PC-9 (cell line): ENCODE measurements at regions of chr9 and their contacts with region 1.

Region 1: GRCh38 chr9:92954049-92954861 is 6.9 kb downstream of the FGD3 start:
- DNase-seq: peak; percentile 90
- H3K4me3 ChIP-seq: peak overlapping the region; percentile 35; the same call in 1 of the 2 replicates
- H3K27ac ChIP-seq: peak overlapping the region; percentile 96
- H3K4me1 ChIP-seq: peaks cover 52% of the 10 kb centered on the region
- H3K27me3 ChIP-seq: no peaks in the 10 kb centered on the region
- CTCF ChIP-seq: no peak

Region 2: GRCh38 chr9:91949946-91950664 is 1004.1 kb before region 1 on chr9 and contains the start of gene ROR2:
- CTCF ChIA-PET with region 1: no interaction called
- POLR2A ChIA-PET with region 1: no interaction called
- intact Hi-C with region 1: no loop called
- DNase-seq: no peak
- H3K4me3 ChIP-seq: no peak within 1 kb of the TSS
- H3K27ac ChIP-seq: no peak within 1 kb of the TSS
- H3K4me1 ChIP-seq: no peaks in the 10 kb centered on the region
- H3K27me3 ChIP-seq: peaks cover 33% of the 10 kb centered on the region
- CTCF ChIP-seq: no peak
- total RNA-seq, gene ROR2: not detected in 2 replicates

Region 3: GRCh38 chr9:92781923-92782322 is 172.3 kb before region 1 on chr9:
- CTCF ChIA-PET with region 1: interaction called, 12 read pairs
- POLR2A ChIA-PET with region 1: no interaction called
- intact Hi-C with region 1: no loop called
- DNase-seq: peak; percentile 76 to 97
- H3K4me3 ChIP-seq: no peak overlapping the region
- H3K27ac ChIP-seq: peak overlapping the region; percentile 66
- H3K4me1 ChIP-seq: peaks cover 31% of the 10 kb centered on the region
- H3K27me3 ChIP-seq: no peaks in the 10 kb centered on the region
- CTCF ChIP-seq: no peak

Region 4: DNA sequence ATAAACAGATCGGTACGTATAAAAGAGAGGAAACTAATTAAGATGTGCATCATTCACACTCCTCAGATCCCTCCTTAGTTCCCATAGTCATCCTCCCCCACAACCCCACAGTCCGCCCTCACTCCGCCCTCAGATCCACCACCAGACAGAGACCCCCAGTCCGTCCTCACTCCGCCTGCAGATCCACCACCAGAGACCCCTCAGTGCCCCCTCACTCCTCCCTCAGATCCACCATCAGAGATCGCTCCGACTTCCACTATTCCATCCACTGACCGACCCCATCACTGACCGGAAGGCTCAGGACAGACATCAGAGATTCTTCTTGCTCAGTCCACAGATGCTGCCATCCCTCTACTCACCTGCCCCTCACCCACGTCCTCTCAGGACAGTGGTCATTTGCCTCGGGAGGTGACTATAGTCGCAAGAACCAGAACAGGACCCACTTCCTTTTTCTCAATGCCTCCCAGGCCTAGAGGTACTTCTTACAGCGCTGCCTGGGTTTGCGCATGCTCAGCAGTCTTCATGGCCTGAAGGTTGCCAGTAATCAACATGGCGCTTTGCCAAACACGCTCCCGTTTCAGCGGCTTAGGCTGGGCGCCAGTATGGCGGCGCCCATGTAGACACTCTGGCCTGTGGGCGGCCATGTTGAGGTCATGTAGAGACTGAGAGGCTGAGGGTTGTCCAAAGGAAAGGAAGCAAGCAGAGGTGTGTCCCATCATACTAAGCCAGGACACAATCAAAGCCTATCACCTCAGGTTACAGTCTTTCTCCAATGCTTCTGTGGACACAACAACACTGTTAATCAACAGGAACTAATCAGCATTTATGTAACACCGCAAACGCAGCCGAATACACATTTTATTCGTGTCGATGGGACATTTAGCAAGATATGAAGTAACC is 76.5 kb before region 1 on chr9 and contains the start of gene ZNF484:
- CTCF ChIA-PET with region 1: interaction called, 6 read pairs
- POLR2A ChIA-PET with region 1: interaction called, 10 read pairs
- intact Hi-C with region 1: loop called (anchors 1 kb)
- DNase-seq: peak; percentile 94 to 99
- H3K4me3 ChIP-seq: peak within 1 kb of the TSS; percentile 68
- H3K27ac ChIP-seq: peak within 1 kb of the TSS; percentile 72
- H3K4me1 ChIP-seq: peaks cover 28% of the 10 kb centered on the region
- H3K27me3 ChIP-seq: no peaks in the 10 kb centered on the region
- CTCF ChIP-seq: no peak
- total RNA-seq, gene ZNF484: 8.4 and 10.8 TPM in 2 replicates

Region 5: DNA sequence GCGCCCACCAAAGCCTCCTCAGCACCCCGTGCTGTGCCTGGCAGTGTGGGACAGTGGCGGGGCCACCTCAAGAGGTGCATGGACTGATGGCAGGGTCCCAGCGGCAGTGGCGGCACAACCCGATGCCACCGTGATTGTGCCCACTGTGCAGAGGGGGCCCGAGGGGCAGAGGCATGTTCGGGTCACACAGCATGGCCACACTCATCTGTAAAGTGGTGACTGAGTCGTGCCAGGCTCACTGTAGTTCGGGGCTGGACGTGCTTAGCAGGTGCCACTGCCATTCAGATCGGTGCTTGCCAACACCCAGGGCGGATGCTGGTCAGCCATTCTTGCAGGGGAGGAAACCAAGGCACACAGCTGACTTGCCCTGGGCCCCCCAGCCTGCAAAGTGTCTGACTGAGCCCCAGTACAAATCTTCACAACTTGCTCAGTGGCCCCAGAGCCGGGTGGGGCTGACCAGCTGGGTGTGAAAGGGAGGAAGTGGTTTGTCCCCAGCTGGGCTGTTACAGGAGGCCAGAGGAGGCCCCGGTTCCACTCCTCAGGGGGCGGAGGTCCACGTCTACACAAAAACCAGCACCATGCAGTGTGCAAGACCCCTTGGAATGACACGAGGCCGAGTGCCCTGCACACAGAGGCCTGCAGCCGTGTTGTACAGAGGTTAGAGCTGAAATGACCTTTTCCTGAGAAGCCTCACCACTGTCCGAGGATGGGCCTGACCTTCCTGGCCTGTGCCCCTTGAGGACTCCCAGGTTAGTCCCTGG is 10.9 kb after region 1 on chr9:
- CTCF ChIA-PET with region 1: no interaction called
- POLR2A ChIA-PET with region 1: no interaction called
- intact Hi-C with region 1: no loop called
- DNase-seq: no peak
- H3K4me3 ChIP-seq: no peak overlapping the region
- H3K27ac ChIP-seq: no peak overlapping the region
- H3K4me1 ChIP-seq: peaks cover 14% of the 10 kb centered on the region
- H3K27me3 ChIP-seq: no peaks in the 10 kb centered on the region
- CTCF ChIP-seq: no peak

Region 6: GRCh38 chr9:92986176-92987085 is 32.2 kb after region 1 on chr9:
- CTCF ChIA-PET with region 1: interaction called, 6 read pairs
- POLR2A ChIA-PET with region 1: no interaction called
- intact Hi-C with region 1: loop called (anchors 1 kb)
- DNase-seq: no peak
- H3K4me3 ChIP-seq: no peak overlapping the region
- H3K27ac ChIP-seq: no peak overlapping the region
- H3K4me1 ChIP-seq: peaks cover 41% of the 10 kb centered on the region
- H3K27me3 ChIP-seq: no peaks in the 10 kb centered on the region
- CTCF ChIP-seq: peak; percentile 68

Region 7: GRCh38 chr9:93038918-93039317 is 84.7 kb after region 1 on chr9:
- CTCF ChIA-PET with region 1: no interaction called
- POLR2A ChIA-PET with region 1: interaction called, 4 read pairs
- intact Hi-C with region 1: loop called (anchors 1 kb)
- DNase-seq: no peak
- H3K4me3 ChIP-seq: no peak overlapping the region
- H3K27ac ChIP-seq: no peak overlapping the region
- H3K4me1 ChIP-seq: no peaks in the 10 kb centered on the region
- H3K27me3 ChIP-seq: no peaks in the 10 kb centered on the region
- CTCF ChIP-seq: no peak

Region 8: DNA sequence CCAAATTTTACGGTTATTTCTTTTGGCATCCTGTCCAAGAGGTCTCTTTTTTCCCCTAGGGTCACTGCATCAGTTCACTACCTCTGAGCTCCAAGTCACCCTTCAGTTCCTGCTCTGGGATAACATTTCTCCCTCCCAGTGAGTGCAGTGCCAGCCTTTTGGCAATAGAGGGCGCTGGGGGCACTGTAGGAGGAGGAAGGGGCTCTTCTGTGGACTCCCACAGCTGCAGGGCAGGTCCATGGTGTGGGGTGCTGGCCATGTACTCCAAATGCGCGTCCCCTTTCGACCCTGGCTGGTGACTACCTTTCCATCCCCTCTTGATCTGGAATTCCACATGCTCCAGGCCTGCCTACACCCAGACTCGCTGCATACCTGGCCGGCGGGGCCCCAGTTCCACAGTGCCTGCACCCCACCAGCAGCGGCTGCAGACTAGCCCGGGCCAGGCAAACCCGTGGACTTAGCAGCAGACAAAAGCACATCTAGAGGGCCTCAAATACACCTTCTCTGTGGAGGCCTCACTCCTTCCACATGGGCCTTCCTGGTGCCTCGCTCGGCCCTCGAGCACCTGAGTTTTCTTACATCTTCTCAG is 200.2 kb after region 1 on chr9:
- CTCF ChIA-PET with region 1: interaction called, 10 read pairs
- POLR2A ChIA-PET with region 1: no interaction called
- intact Hi-C with region 1: loop called (anchors 2 kb)
- DNase-seq: peak in 1 of 2 experiments; percentile 60
- H3K4me3 ChIP-seq: no peak overlapping the region
- H3K27ac ChIP-seq: no peak overlapping the region
- H3K4me1 ChIP-seq: no peaks in the 10 kb centered on the region; the same call in 1 of the 2 replicates
- H3K27me3 ChIP-seq: no peaks in the 10 kb centered on the region
- CTCF ChIP-seq: peak; percentile 86

Region 9: GRCh38 chr9:93453047-93453914 is 499.0 kb after region 1 on chr9 and contains the start of gene FAM120AOS:
- CTCF ChIA-PET with region 1: no interaction called
- POLR2A ChIA-PET with region 1: no interaction called
- intact Hi-C with region 1: loop called (anchors 10 kb)
- DNase-seq: peak; percentile 93 to 94
- H3K4me3 ChIP-seq: peak within 1 kb of the TSS; percentile 74
- H3K27ac ChIP-seq: peak within 1 kb of the TSS; percentile 42
- H3K4me1 ChIP-seq: peaks cover 31% of the 10 kb centered on the region
- H3K27me3 ChIP-seq: no peaks in the 10 kb centered on the region
- CTCF ChIP-seq: no peak
- total RNA-seq, gene FAM120AOS: 27.8 and 34.6 TPM in 2 replicates